ENCODE measurements at regions of chr6 and their contacts with region 1.

Region 1: GRCh38 chr6:134822920-134823709 is 126.8 kb downstream of the ALDH8A1 start:
- DNase-seq: peak; percentile 93

Region 2: GRCh38 chr6:134379086-134379485 is 444.0 kb before region 1 on chr6:
- in situ Hi-C with region 1: no loop called
- DNase-seq: no peak

Region 3: GRCh38 chr6:134706153-134706552 is 117.0 kb before region 1 on chr6:
- in situ Hi-C with region 1: no loop called
- DNase-seq: no peak

Region 4: GRCh38 chr6:134724771-134725340 is 98.3 kb before region 1 on chr6:
- in situ Hi-C with region 1: loop called (anchors 5 kb)
- DNase-seq: no peak

Region 5: GRCh38 chr6:134787261-134787877 is 35.7 kb before region 1 on chr6:
- in situ Hi-C with region 1: no loop called
- DNase-seq: no peak

Region 6: GRCh38 chr6:135267085-135267484 is 444.0 kb after region 1 on chr6:
- in situ Hi-C with region 1: no loop called
- DNase-seq: no peak

Measured in SK-MEL-5 (cell line).